ENCODE measurements at regions of chr1 and their contacts with region 1.

Region 1: DNA sequence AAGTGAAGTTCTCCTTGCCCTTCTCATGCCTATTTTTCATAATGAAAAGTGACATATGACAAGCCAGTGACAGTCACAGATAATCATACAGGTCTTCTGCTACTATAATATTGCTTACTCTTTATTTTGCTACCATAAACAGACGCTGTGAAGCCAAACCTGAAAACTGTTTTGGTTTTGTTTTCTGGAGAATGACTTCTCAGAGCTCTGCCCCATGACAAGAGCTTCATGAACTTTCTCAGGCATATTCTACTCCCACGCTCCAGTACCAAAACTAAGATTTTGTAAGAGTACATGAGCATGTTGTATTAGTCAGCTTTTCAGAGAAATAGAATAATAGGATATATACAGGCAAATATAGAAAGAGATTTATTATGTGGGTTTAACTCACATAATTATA is 64.3 kb upstream of the VTCN1 start:
- DNase-seq: no peak
- ATAC-seq: no peak
- H3K4me3 ChIP-seq: no peak overlapping the region
- H3K27ac ChIP-seq: no peak overlapping the region
- H3K4me1 ChIP-seq: peaks cover 0 to 4% (median 4%) of the 10 kb centered on the region in 3 donors
- H3K27me3 ChIP-seq: no peaks in the 10 kb centered on the region
- CTCF ChIP-seq: no peak

Region 2: GRCh38 chr1:117067533-117068370 is 207.3 kb before region 1 on chr1:
- intact Hi-C with region 1: loop called in 2 of 3 experiments (anchors 5 to 10 kb)
- DNase-seq: peak in 5 of 6 donors; percentile 43 to 63 (median 58)
- ATAC-seq: peak; percentile 90 to 99 (median 98)
- H3K4me3 ChIP-seq: no peak overlapping the region
- H3K27ac ChIP-seq: no peak overlapping the region
- H3K4me1 ChIP-seq: no peaks in the 10 kb centered on the region
- H3K27me3 ChIP-seq: no peaks in the 10 kb centered on the region
- CTCF ChIP-seq: peak; percentile 39 to 75 (median 64)

Region 3: GRCh38 chr1:117225967-117226366 is 49.1 kb before region 1 on chr1:
- intact Hi-C with region 1: no loop called
- DNase-seq: no peak
- ATAC-seq: no peak
- H3K4me3 ChIP-seq: no peak overlapping the region
- H3K27ac ChIP-seq: no peak overlapping the region
- H3K4me1 ChIP-seq: no peaks in the 10 kb centered on the region
- H3K27me3 ChIP-seq: no peaks in the 10 kb centered on the region
- CTCF ChIP-seq: no peak

Measured in pancreas (tissue), 10 donors.